ENCODE measurements at regions of chr5 and their contacts with region 1.

Region 1: DNA sequence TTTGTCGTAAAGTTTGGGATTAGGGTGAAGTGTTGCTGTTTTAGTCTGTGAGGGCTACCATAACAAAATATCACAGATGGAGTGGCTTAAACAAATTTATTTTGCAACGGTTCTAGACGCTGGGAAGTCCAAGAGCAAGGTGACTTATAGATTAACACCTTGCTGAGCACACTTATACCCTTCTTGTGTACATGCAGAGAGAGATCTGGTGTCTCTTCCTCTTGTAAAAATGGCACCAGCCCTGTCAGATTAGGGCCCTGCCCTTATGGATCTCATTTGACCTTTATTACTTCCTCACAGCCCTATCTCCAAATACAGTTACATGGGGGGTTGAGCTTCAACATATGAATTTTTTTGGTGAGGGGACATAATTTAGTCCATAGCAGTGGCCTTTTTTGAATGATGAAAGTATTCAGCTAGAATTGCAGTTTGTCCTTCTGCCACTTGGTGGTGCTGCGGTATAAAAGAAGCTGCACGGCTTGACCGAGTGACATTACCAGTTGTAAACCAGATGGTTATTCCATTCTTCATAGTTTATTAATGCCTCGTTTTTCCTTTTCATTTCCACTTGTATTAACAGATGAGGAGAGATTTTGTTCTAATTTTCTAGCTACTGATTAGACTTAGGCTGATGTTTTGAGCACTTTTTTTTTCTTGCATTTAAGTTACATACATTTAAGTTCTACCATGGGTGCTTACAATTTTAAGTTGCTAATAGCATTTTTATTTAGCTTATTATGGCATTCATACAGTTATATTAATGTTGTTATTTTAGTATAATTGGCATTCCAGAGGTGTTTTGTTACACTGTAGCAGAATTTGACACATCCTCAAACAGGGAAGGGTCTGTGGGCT is 19.4 kb downstream of the DCP2 start:
- DNase-seq: peak; percentile 61 to 77 (median 69)
- H3K4me3 ChIP-seq: no peak overlapping the region
- H3K27ac ChIP-seq: no peak overlapping the region
- H3K4me1 ChIP-seq: no peaks in the 10 kb centered on the region
- H3K27me3 ChIP-seq: no peaks in the 10 kb centered on the region

Region 2: DNA sequence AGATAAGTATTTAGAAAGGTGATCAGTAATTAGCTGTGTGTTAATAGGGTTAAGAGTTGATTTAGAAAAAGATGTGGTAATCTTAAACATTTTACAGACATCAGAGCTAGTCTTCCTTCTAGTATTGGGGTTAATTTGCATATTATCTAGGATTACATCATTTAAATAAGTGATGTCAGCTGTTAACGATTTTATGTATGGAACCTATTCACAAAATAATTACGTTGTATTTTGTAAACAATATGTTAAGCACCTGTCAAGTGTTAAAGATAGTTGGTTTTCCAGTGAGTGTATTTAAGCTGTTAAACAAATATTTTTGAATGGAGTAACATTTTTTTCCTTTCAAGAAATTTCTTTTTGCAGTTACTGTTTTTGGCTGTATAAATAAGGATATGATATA is 17.2 kb before region 1 on chr5:
- CTCF ChIA-PET with region 1: interaction called, 20 read pairs
- POLR2A ChIA-PET with region 1: no interaction called
- DNase-seq: no peak
- H3K4me3 ChIP-seq: peak overlapping the region in 1 of 7 experiments; percentile 84
- H3K27ac ChIP-seq: peak overlapping the region in 1 of 2 experiments; percentile 59
- H3K4me1 ChIP-seq: peaks cover 2 to 30% (median 19%) of the 10 kb centered on the region in 4 experiments
- H3K27me3 ChIP-seq: no peaks in the 10 kb centered on the region

Region 3: DNA sequence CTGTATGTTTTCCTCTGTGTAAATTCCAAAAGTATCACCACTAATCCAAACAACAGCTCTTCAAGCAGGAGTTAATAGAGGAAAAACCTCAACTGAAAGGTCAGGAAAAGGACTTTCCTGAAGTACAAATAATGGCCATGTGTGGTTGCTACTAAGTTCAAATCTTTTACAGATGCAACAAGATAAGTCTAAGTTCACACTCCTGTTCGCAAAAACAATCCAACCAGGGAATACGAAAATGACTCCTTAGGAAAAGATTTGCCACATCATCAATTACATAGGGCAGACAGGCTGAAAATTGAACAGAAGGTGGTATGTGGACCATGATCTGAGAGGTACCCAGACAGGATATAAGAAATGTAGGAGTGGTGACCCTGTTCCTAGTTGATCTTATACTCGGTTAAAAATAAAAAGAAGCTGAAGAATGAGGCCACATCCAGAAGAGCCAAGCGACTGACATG is 228.6 kb after region 1 on chr5:
- CTCF ChIA-PET with region 1: no interaction called
- POLR2A ChIA-PET with region 1: no interaction called
- DNase-seq: no peak
- H3K4me3 ChIP-seq: no peak overlapping the region
- H3K27ac ChIP-seq: no peak overlapping the region
- H3K4me1 ChIP-seq: no peaks in the 10 kb centered on the region
- H3K27me3 ChIP-seq: peaks cover 0 to 9% (median 3%) of the 10 kb centered on the region in 5 experiments

Region 4: GRCh38 chr5:113236536-113237288 is 240.7 kb after region 1 on chr5:
- CTCF ChIA-PET with region 1: no interaction called
- POLR2A ChIA-PET with region 1: no interaction called
- DNase-seq: no peak
- H3K4me3 ChIP-seq: no peak overlapping the region
- H3K27ac ChIP-seq: no peak overlapping the region
- H3K4me1 ChIP-seq: no peaks in the 10 kb centered on the region
- H3K27me3 ChIP-seq: peaks cover 0 to 25% (median 4%) of the 10 kb centered on the region in 5 experiments

Region 5: GRCh38 chr5:113330533-113331208 is 334.7 kb after region 1 on chr5:
- CTCF ChIA-PET with region 1: interaction called, 70 read pairs
- POLR2A ChIA-PET with region 1: no interaction called
- DNase-seq: peak; percentile 45 to 75 (median 75)
- H3K4me3 ChIP-seq: peak overlapping the region in 1 of 7 experiments; percentile 55
- H3K27ac ChIP-seq: no peak overlapping the region
- H3K4me1 ChIP-seq: peaks cover 5 to 13% (median 6%) of the 10 kb centered on the region in 4 experiments
- H3K27me3 ChIP-seq: peaks cover 0 to 6% (median 0%) of the 10 kb centered on the region in 5 experiments

Region 6: DNA sequence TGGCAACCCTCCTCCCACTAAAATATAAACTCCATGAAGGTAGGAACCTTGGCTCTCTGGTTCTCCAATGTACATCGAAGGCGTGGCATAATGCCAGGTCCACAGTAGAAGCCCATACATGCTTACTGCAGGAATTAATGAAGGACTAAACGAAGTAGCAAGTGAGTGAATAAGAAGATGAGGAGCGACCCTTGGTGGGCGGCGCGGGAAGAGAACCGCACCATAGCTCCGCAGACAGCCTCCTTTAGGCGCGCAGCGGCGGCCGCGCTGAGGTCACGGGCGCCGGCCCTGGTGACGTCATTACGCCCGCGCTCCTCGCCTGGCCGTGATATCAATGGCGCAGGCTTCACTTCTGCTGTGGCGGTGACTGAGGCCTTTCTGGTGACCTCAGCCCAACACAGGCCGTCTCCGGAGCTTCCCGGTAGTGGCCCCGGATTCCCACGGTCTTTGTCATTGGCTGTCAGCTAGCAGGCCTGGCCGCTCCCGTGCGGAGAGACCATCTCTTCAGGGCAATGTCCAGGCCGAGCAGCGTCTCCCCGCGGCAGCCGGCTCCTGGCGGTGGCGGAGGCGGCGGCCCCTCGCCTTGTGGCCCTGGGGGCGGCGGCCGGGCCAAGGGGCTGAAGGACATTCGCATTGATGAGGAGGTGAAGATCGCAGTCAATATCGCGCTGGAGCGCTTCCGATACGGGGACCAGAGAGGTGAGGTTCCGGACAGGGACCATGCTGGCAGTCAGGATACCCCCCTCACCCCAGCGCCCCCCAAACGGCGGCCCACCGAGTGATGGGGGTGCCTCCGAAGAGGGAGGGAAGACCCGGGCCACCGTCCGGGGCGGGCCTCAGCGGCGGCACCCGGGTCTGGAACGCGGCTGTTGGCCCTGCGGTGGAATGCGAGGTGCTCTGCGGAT is 517.6 kb after region 1 on chr5 and contains the start of gene YTHDC2:
- CTCF ChIA-PET with region 1: interaction called, 28 read pairs
- POLR2A ChIA-PET with region 1: no interaction called
- DNase-seq: peak; percentile 89 to 94 (median 90)
- H3K4me3 ChIP-seq: peak within 1 kb of the TSS; percentile 79 to 93 (median 85)
- H3K27ac ChIP-seq: peak within 1 kb of the TSS; percentile 64 to 83
- H3K4me1 ChIP-seq: peaks cover 3 to 8% (median 6%) of the 10 kb centered on the region in 4 experiments
- H3K27me3 ChIP-seq: peaks cover 0 to 34% (median 8%) of the 10 kb centered on the region in 5 experiments

Region 7: GRCh38 chr5:113606298-113607134 is 610.5 kb after region 1 on chr5:
- CTCF ChIA-PET with region 1: interaction called, 39 read pairs
- POLR2A ChIA-PET with region 1: no interaction called
- DNase-seq: peak; percentile 51 to 74 (median 74)
- H3K4me3 ChIP-seq: peak overlapping the region in 1 of 7 experiments; percentile 5
- H3K27ac ChIP-seq: no peak overlapping the region
- H3K4me1 ChIP-seq: peaks cover 0 to 7% (median 2%) of the 10 kb centered on the region in 4 experiments
- H3K27me3 ChIP-seq: peaks cover 0 to 59% (median 25%) of the 10 kb centered on the region in 5 experiments

Measured in common myeloid progenitor, CD34-positive (primary cell).